Astrocyte of the cerebellum (primary cell): ENCODE measurements at regions of chr15 and their contacts with region 1.

Region 1: GRCh38 chr15:96670389-96670788 is 339.9 kb downstream of the NR2F2 start:
- DNase-seq: no peak
- H3K4me3 ChIP-seq: no peak overlapping the region
- CTCF ChIP-seq: no peak

Region 2: DNA sequence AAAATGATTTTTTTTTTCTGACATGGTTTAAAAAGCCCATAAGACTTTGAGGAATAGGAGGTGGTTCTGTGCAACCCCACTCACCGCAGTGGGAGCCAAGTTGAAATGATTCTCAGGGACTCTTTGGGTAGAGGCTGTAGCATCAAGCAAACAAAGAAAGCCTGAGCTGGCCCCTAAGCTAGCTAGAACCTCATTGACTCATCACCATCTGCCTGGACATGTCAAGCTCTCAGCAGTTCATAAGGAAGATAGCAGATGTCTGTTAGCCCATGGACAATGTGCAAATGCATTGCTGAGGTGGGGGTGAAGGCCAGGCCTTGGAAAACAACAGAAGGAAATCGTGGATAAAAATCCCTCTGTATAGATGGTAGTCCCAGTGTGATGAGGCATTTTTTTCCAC is 105.1 kb before region 1 on chr15:
- in situ Hi-C with region 1: loop called (anchors 5 kb)
- DNase-seq: no peak
- H3K4me3 ChIP-seq: no peak overlapping the region
- CTCF ChIP-seq: no peak

Region 3: GRCh38 chr15:96720251-96720650 is 49.9 kb after region 1 on chr15:
- in situ Hi-C with region 1: no loop called
- DNase-seq: no peak
- H3K4me3 ChIP-seq: no peak overlapping the region
- CTCF ChIP-seq: no peak